Ascending aorta (tissue), 2 donors: ENCODE measurements at regions of chr6 and their contacts with region 1.

Region 1: DNA sequence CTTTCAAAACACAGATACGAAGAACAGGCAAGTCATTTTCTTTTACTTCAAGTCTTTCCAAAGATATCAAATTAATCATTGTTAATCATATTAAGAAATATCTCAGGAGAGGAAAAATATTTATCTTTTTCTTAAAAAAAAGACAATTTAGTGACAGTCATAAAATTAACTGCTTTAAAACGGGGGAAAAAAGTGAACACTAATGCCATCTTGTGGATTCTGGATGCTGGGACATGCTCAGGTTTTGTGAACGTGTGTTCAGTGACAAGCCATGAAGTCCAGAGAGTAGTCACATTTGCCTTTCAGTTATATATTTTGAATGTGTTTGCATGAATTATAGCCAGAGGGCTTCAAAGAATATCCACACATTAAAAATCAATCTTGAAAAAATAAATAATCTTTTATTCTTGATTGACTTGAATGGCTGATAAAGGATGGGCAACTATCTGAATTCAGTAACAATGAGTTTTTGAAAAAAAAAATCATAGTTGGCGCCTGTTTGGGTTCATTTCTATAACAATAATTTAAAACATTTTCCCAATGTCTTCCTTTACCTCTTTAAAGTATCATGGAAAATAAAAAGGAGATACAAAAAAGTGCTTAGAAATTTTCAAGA is 74.7 kb upstream of the NOX3 start:
- DNase-seq: no peak
- H3K4me3 ChIP-seq: no peak overlapping the region
- H3K27ac ChIP-seq: peak overlapping the region in 1 of 2 donors; percentile 68
- H3K4me1 ChIP-seq: peaks cover 0 to 15% of the 10 kb centered on the region in 2 donors
- H3K27me3 ChIP-seq: no peaks in the 10 kb centered on the region
- CTCF ChIP-seq: peak; percentile 59 to 81 (median 70)

Region 2: DNA sequence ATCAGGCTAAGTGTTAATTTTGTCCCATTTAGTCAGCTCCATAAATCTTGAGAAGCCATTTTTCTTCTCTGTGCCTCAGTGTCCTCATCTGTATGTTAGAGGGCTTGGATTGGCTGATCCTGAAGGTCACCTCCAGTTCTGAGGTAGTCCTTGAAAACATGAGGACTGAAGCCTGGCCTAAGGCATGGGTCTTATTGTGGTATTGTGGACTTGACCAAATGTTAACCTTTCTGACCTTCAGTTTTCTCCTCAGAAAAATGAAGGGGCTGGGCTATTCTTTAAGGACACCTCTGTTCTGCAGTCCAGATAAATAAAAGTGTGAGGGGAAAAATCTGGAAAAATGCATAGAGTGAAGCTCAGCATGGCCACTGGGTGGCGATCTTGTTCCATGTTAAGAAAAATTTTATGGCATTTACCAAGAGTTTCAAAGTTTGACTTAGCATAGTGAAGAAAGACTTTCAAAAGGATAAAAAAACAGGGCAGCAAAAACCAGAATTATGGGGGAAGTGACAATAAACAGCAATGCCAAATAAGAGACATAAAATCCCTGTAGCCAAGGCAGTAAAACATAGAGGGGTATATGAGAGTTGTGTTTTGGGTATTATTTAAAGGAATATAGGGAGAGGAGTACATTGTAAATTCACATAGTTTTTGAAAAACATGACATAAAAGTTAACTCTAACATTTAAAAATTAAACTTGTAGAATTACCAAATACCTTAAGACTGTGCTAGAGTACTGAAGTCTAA is 202.8 kb before region 1 on chr6:
- intact Hi-C with region 1: loop called (anchors 1 kb)
- DNase-seq: peak in 1 of 2 donors; percentile 70
- H3K4me3 ChIP-seq: no peak overlapping the region
- H3K27ac ChIP-seq: no peak overlapping the region
- H3K4me1 ChIP-seq: no peaks in the 10 kb centered on the region
- H3K27me3 ChIP-seq: no peaks in the 10 kb centered on the region
- CTCF ChIP-seq: peak; percentile 68 to 87 (median 77)

Region 3: GRCh38 chr6:155418017-155418761 is 112.1 kb before region 1 on chr6:
- intact Hi-C with region 1: loop called (anchors 2 kb)
- DNase-seq: peak; percentile 30 to 76
- H3K4me3 ChIP-seq: peak overlapping the region; percentile 17 to 33
- H3K27ac ChIP-seq: peak overlapping the region; percentile 30 to 61
- H3K4me1 ChIP-seq: no peaks in the 10 kb centered on the region
- H3K27me3 ChIP-seq: no peaks in the 10 kb centered on the region
- CTCF ChIP-seq: no peak

Region 4: DNA sequence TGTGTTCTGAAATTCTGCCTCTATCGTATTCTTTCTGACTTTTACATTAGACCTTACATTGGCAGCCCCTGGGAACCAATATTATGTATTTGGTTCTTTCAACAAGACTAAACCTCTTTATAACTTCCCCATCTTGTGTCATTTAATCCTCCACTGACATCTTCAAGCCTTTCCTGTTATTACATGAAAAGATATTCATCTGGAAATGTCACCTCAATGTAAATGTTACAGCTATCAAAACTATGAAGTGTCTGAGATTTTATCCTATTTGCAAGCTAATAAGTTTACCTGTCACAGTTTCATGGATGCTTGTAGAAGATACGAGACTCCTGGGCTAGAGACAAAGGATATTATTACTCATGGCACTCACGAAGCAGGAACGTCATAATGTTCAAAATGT is 30.8 kb before region 1 on chr6:
- intact Hi-C with region 1: no loop called
- DNase-seq: no peak
- H3K4me3 ChIP-seq: no peak overlapping the region
- H3K27ac ChIP-seq: no peak overlapping the region
- H3K4me1 ChIP-seq: peaks cover 7 to 10% of the 10 kb centered on the region in 2 donors
- H3K27me3 ChIP-seq: no peaks in the 10 kb centered on the region
- CTCF ChIP-seq: no peak

Region 5: DNA sequence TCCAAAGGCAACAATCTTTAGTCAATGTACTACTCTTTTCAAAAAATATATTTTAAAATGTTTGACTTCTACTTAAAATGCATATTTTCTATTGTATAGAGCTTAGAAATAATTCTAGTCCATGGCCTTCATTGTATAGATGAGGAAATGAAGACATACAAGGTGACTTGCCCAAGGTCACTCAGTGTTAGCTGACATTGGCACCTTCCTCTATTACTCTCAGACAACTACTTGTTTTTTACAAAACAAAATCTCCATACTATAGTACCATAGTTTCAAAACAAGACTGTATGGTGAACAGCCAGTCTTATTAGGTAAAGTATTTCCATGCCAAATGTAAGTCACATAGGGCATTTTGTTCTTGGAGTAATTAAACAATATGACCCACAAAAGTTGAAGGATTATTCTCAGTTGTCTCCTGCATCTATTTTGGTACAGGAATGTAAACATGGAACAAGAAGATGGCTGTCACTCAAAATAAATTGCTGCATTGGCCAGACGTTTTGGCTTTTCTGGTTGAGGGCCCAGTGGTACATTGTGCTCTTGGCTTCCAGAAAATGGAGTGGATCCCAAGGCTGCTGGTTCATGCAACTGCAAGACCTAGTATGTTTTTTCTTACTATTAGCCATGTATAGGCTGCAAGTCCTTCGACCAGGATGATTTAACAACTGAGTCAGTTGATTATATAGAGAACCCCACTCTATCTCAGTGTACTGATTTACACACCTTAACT is 20.4 kb before region 1 on chr6:
- intact Hi-C with region 1: loop called (anchors 2 kb)
- DNase-seq: no peak
- H3K4me3 ChIP-seq: no peak overlapping the region
- H3K27ac ChIP-seq: peak overlapping the region in 1 of 2 donors; percentile 15
- H3K4me1 ChIP-seq: peaks cover 9 to 26% of the 10 kb centered on the region in 2 donors
- H3K27me3 ChIP-seq: no peaks in the 10 kb centered on the region
- CTCF ChIP-seq: no peak

Region 6: GRCh38 chr6:155543166-155543847 is 13.0 kb after region 1 on chr6:
- intact Hi-C with region 1: no loop called
- DNase-seq: no peak
- H3K4me3 ChIP-seq: no peak overlapping the region
- H3K27ac ChIP-seq: no peak overlapping the region
- H3K4me1 ChIP-seq: no peaks in the 10 kb centered on the region
- H3K27me3 ChIP-seq: no peaks in the 10 kb centered on the region
- CTCF ChIP-seq: no peak